ENCODE measurements at regions of chr17 and their contacts with region 1.

Region 1: DNA sequence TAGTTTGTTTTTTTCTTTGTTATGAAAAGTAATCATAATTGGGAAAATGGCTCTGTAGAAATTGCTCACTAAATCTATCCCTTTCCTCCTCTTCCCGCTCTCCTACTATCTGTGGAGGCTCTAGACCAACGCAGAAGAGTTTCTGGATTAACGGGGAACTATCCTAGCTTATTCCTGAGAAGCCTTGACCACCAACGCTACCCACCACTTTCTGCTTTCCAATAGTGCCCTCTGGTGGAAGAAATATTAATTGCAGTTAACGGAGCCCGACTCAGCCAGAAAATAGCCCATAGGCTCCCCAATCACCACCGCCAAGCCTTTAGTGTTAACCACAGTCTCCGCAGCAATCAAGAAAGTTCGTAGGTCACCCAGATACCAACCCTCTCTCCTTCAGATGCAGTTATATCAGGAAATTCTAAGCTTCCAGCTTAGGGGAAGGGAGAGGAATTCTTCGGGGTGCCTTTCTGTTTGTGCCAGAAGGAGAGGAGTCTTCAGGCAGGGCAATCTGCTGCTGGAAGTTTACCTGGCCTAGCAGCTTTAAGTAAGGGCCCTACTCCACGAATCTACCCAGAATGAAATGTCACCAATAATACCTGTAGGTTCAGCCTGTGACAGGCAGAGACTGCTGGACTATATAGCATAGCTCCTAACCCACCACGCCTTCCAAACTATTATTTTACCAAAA is 23.0 kb upstream of the NSRP1 start:
- DNase-seq: peak; percentile 63 to 94
- ATAC-seq: peak; percentile 79 to 92
- H3K4me3 ChIP-seq: no peak overlapping the region
- H3K27ac ChIP-seq: no peak overlapping the region
- H3K4me1 ChIP-seq: peaks cover 6% of the 10 kb centered on the region; the same call in 1 of the 3 replicates
- CTCF ChIP-seq: peak; percentile 97
- EP300 ChIP-seq: no peak
- POLR2A ChIP-seq: no peak
- RAD21 ChIP-seq: peak; percentile 95 to 96

Region 2: DNA sequence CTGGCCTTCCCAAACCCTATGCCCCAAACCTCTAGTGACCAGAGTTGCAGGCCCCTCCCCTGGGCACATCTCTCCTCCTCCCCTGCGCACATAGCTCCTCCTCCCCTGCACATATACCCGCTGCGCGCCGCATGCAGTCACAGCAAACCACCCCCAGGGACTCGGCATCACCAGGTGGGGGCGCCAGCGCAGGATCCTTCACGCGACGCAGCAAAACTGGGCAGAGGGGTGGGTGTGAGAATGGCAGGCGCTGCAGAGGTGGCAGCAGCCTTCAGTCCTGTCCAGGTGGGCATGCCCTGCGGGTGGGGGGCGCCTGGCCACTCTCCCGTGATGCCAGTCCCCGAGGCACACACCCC is 476.5 kb before region 1 on chr17:
- CTCF ChIA-PET with region 1: interaction called, 14 read pairs
- POLR2A ChIA-PET with region 1: no interaction called
- DNase-seq: peak; percentile 84 to 88
- ATAC-seq: peak; percentile 19 to 67; a peak in 3 of 6 replicates
- H3K4me3 ChIP-seq: peak overlapping the region; percentile 23; the same call in 1 of the 3 replicates
- H3K27ac ChIP-seq: peak overlapping the region in 1 of 2 experiments; percentile 82; a peak in 4 of 6 replicates
- H3K4me1 ChIP-seq: peaks cover 56% of the 10 kb centered on the region
- CTCF ChIP-seq: peak; percentile 58
- EP300 ChIP-seq: no peak
- POLR2A ChIP-seq: peak; percentile 21; the same call in 1 of the 2 replicates
- RAD21 ChIP-seq: peak in 1 of 2 experiments; percentile 23; a peak in 1 of 5 replicates

Region 3: GRCh38 chr17:29807520-29808351 is 285.9 kb before region 1 on chr17:
- CTCF ChIA-PET with region 1: interaction called, 162 read pairs
- POLR2A ChIA-PET with region 1: interaction called, 3 read pairs
- DNase-seq: peak; percentile 72 to 73
- ATAC-seq: peak; percentile 90 to 94
- H3K4me3 ChIP-seq: peak overlapping the region; percentile 47
- H3K27ac ChIP-seq: peak overlapping the region; percentile 62 to 78
- H3K4me1 ChIP-seq: no peaks in the 10 kb centered on the region
- CTCF ChIP-seq: peak; percentile 99
- EP300 ChIP-seq: no peak
- POLR2A ChIP-seq: no peak
- RAD21 ChIP-seq: peak; percentile 92 to 93

Region 4: GRCh38 chr17:29962656-29963055 is 130.9 kb before region 1 on chr17:
- CTCF ChIA-PET with region 1: interaction called, 12 read pairs
- POLR2A ChIA-PET with region 1: no interaction called
- DNase-seq: no peak
- ATAC-seq: no peak
- H3K4me3 ChIP-seq: no peak overlapping the region
- H3K27ac ChIP-seq: no peak overlapping the region
- H3K4me1 ChIP-seq: peaks cover 18% of the 10 kb centered on the region
- CTCF ChIP-seq: no peak
- EP300 ChIP-seq: no peak
- POLR2A ChIP-seq: no peak
- RAD21 ChIP-seq: no peak

Region 5: GRCh38 chr17:30041551-30041950 is 52.1 kb before region 1 on chr17:
- CTCF ChIA-PET with region 1: interaction called, 49 read pairs
- POLR2A ChIA-PET with region 1: no interaction called
- DNase-seq: no peak
- ATAC-seq: no peak
- H3K4me3 ChIP-seq: no peak overlapping the region
- H3K27ac ChIP-seq: no peak overlapping the region
- H3K4me1 ChIP-seq: no peaks in the 10 kb centered on the region
- CTCF ChIP-seq: no peak
- EP300 ChIP-seq: no peak
- POLR2A ChIP-seq: no peak
- RAD21 ChIP-seq: no peak

Region 6: GRCh38 chr17:30074730-30075129 is 18.9 kb before region 1 on chr17:
- CTCF ChIA-PET with region 1: interaction called, 23 read pairs
- POLR2A ChIA-PET with region 1: no interaction called
- DNase-seq: no peak
- ATAC-seq: no peak
- H3K4me3 ChIP-seq: no peak overlapping the region
- H3K27ac ChIP-seq: no peak overlapping the region
- H3K4me1 ChIP-seq: no peaks in the 10 kb centered on the region
- CTCF ChIP-seq: no peak
- EP300 ChIP-seq: no peak
- POLR2A ChIP-seq: no peak
- RAD21 ChIP-seq: no peak

Region 7: DNA sequence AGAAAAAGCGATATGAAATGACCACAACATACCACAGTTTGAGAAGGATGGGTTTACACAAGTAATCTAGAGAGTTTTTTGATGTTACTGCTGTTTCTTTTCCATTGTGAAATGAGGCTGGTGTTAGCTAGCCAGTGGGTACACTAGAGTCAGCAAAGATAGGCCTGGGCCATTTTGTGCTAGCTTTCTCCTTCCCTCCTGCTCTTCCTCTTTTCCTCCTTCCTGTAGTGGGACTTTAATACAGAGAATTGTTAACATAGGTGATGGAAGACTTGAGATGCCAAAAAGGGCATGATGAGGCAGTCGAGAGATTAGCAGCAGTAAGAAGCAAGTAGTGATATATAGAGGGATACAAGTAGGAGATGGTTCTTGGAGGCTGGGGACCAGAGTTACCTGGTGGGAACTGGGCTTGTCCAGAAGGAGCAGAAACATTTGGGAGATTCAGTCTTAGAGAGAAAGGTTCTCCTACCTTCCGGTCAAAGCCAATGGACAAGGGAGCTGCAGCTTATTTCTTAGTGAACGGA is 30.7 kb after region 1 on chr17:
- CTCF ChIA-PET with region 1: interaction called, 10 read pairs
- POLR2A ChIA-PET with region 1: no interaction called
- DNase-seq: no peak
- ATAC-seq: peak in 1 of 2 experiments; percentile 55; a peak in 3 of 6 replicates
- H3K4me3 ChIP-seq: no peak overlapping the region
- H3K27ac ChIP-seq: no peak overlapping the region
- H3K4me1 ChIP-seq: peaks cover 13% of the 10 kb centered on the region; the same call in 2 of the 3 replicates
- CTCF ChIP-seq: no peak
- EP300 ChIP-seq: no peak
- POLR2A ChIP-seq: no peak
- RAD21 ChIP-seq: no peak

Region 8: DNA sequence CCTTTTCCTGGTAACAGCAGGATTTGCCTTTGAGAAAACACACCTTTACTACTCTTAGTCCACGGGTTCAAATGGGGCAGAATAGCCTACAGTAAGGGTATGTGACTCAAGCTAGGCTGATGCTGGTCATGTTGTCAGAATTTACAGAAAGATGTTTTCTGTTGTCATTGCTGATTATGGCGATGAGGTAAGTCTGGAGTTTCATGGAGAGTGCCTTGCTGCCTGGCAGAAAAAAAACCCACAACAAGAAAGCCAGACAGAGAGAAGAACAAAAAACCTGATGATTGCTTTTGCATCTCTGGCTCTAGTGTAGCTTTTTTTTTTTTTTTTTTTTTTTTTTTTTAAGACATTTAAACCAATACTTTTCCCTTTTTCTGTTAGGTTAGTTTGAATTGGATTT is 94.0 kb after region 1 on chr17:
- CTCF ChIA-PET with region 1: no interaction called
- POLR2A ChIA-PET with region 1: no interaction called
- DNase-seq: no peak
- ATAC-seq: no peak
- H3K4me3 ChIP-seq: no peak overlapping the region
- H3K27ac ChIP-seq: no peak overlapping the region
- H3K4me1 ChIP-seq: no peaks in the 10 kb centered on the region
- CTCF ChIP-seq: no peak
- EP300 ChIP-seq: no peak
- POLR2A ChIP-seq: no peak
- RAD21 ChIP-seq: no peak

Region 9: DNA sequence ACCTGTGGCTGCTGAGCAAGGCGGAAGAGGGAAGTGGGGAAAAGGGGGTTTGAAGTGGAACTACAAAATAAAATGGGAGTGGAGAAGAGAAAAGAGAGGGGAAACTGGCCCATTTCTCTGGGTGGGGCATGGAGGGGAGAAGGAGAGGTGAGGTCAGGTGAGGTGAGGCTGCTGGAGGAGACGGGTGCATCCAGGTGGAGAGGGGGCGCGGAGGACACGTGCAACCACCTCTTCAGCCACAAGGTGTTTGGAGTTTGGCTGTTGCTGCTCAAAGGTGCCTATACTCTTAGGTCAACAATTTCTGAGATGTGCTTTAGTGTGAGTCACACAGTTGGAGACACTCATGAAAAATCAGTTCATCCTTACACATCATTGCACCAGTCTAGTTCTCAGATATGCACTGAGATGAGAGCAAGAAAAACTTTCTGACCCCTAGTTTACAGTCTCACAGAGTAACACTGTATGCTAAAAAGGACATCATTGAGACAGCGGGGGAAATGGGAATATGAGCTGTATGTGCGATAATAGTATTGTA is 137.1 kb after region 1 on chr17:
- CTCF ChIA-PET with region 1: no interaction called
- POLR2A ChIA-PET with region 1: no interaction called
- DNase-seq: no peak
- ATAC-seq: peak in 1 of 2 experiments; percentile 60; a peak in 1 of 6 replicates
- H3K4me3 ChIP-seq: no peak overlapping the region
- H3K27ac ChIP-seq: no peak overlapping the region
- H3K4me1 ChIP-seq: peaks cover 7% of the 10 kb centered on the region; the same call in 2 of the 3 replicates
- CTCF ChIP-seq: no peak
- EP300 ChIP-seq: no peak
- POLR2A ChIP-seq: no peak
- RAD21 ChIP-seq: no peak

Region 10: DNA sequence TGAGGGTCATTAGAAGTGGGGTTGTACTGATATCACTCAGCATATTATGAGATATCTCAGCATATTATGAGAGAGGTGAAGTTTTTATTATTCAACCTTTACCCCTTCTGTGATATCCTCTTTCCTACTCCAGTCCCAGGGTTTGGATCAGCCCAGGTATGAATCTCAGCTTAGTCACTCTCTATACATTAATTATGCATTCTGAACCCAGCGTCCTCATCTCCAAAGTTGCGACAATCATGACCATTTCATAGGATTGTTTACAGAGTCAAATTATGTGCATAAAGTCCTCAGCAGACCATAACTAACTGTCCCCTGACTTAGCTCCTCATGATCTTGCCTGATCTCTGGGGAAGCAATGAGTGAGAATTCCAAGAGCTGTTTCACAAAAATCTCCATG is 218.6 kb after region 1 on chr17:
- CTCF ChIA-PET with region 1: no interaction called
- POLR2A ChIA-PET with region 1: no interaction called
- DNase-seq: no peak
- ATAC-seq: no peak
- H3K4me3 ChIP-seq: no peak overlapping the region
- H3K27ac ChIP-seq: no peak overlapping the region
- H3K4me1 ChIP-seq: peaks cover 6% of the 10 kb centered on the region; the same call in 2 of the 3 replicates
- CTCF ChIP-seq: no peak
- EP300 ChIP-seq: no peak
- POLR2A ChIP-seq: no peak
- RAD21 ChIP-seq: no peak

Measured in A549 (cell line).